H1 (cell line): ENCODE measurements at regions of chr11 and their contacts with region 1.

Region 1: GRCh38 chr11:108647701-108648527 is 17.0 kb upstream of the DDX10 start:
- DNase-seq: peak; percentile 63 to 64
- H3K4me3 ChIP-seq: no peak overlapping the region
- H3K27ac ChIP-seq: no peak overlapping the region
- H3K4me1 ChIP-seq: peaks cover 0 to 10% (median 0%) of the 10 kb centered on the region in 4 experiments; a peak in 4 of 7 replicates
- H3K27me3 ChIP-seq: peaks cover 0 to 1% (median 0%) of the 10 kb centered on the region in 4 experiments; a peak in 1 of 7 replicates
- CTCF ChIP-seq: peak; percentile 51 to 92 (median 87)
- EP300 ChIP-seq: no peak
- POLR2A ChIP-seq: no peak
- RAD21 ChIP-seq: peak; percentile 99

Region 2: DNA sequence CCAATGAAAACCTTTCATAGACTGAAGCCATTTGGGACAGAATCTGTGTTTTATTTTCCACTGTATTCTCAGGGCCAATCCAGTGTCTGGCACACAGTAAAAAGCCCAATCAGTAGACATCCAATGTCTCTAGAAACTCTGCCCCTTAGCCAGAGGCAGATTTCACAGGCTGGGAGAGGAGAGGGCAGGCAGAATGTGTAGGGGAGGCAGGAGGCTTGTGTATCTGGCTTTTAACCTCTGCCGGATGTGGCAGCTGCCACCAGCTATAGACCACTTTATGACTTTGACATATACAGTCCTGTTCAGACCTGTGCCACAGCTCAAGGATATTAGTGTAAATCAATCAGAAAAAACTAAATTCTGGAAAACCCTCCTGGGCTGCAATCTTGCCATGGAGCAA is 58.8 kb before region 1 on chr11:
- CTCF ChIA-PET with region 1: interaction called, 12 read pairs
- POLR2A ChIA-PET with region 1: no interaction called
- DNase-seq: no peak
- H3K4me3 ChIP-seq: no peak overlapping the region
- H3K27ac ChIP-seq: no peak overlapping the region
- H3K4me1 ChIP-seq: peaks cover 0 to 9% (median 5%) of the 10 kb centered on the region in 4 experiments; a peak in 4 of 7 replicates
- H3K27me3 ChIP-seq: peaks cover 0 to 10% (median 6%) of the 10 kb centered on the region in 4 experiments; a peak in 5 of 7 replicates
- CTCF ChIP-seq: no peak
- EP300 ChIP-seq: no peak
- POLR2A ChIP-seq: no peak
- RAD21 ChIP-seq: no peak

Region 3: DNA sequence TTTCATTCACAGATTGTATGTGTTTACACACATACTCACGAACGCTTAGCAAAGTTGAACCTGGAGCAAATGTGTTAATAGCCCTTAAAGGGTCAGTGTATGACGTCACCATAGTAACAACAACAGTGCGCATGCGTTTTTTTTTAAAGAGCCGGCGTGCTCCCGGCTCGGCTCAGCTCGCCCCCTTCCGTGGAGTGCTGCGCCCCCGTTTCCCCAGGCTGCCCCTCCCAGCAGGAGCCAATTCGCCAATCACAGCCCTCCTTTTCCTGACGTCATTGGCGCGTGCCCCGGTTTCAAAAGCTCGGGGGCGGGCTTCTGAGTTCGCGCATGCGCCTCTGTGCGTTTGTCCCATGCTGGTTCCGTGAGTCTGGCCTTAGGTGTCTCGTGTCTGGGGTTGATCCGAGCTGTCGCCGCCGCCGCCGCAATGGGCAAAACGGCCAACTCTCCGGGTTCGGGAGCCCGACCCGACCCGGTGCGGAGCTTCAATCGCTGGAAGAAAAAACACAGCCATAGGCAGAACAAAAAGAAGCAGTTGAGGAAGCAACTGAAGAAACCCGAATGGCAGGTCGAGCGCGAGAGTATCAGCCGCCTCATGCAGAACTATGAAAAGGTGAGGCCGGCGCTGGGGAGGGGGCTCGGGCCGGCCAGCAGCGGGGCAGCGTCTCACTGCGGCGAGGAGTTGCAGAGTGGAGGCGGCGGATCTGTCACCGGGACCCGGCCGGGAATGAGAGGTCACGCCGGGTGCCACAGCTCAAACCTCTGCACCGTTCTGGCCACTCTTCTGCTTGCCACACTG is 17.0 kb after region 1 on chr11 and contains the start of gene DDX10:
- CTCF ChIA-PET with region 1: interaction called, 11 read pairs
- POLR2A ChIA-PET with region 1: interaction called, 3 read pairs
- DNase-seq: peak; percentile 94 to 98
- H3K4me3 ChIP-seq: peak within 1 kb of the TSS; percentile 69 to 94 (median 78)
- H3K27ac ChIP-seq: no peak within 1 kb of the TSS
- H3K4me1 ChIP-seq: peaks cover 0 to 6% (median 4%) of the 10 kb centered on the region in 4 experiments; a peak in 4 of 7 replicates
- H3K27me3 ChIP-seq: no peaks in the 10 kb centered on the region
- CTCF ChIP-seq: no peak
- EP300 ChIP-seq: no peak
- POLR2A ChIP-seq: peak in 1 of 2 experiments; percentile 69; a peak in 2 of 3 replicates
- RAD21 ChIP-seq: no peak
- total RNA-seq, gene DDX10: 44.9 and 52.2 TPM in 2 replicates